Caco-2 (cell line): ENCODE measurements at regions of chr11 and their contacts with region 1.

Region 1: DNA sequence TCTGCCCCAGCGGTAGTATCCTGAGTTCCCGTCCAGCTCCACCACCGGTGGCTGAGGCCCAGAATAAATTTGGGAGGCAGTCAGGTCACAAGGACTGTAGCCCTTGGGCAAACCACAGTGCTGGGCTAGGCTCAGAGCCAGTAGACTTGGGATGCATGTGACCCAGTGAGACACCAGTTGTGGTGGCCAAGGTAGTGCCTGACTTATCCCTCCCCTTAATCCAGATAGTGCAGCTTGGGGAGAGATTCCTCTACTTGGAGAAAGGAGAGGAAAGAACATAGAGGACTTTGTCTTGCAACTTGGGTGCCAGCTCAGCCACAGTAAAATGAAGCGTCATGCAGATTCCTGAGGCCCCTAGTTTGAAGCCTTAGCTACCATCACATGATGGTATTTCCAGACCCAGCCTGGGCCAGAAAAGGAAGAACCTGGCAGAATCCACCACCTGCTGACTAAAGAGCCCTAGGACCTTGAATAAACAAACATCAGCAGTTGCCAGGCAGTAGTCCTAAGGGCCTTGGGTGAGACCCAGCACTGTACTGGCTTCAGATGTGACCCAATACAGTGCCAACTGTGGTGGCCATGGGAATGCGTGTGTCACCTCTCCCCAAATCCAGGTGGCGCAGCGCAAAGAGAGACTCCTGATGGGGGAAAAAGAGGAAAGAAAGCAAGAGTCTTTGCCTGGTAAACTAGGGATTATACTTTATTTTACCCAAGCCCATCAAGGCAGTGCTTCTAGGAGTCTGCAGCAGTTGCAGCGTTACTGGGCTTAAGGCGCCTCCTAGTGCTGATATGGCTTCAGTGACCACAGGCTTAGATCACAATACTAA is 17.0 kb upstream of the DDX10 start:
- DNase-seq: peak; percentile 82 to 84
- H3K4me3 ChIP-seq: no peak overlapping the region
- H3K4me3 Mint-ChIP-seq: no peak overlapping the region
- H3K27ac Mint-ChIP-seq: no peak overlapping the region
- H3K4me1 ChIP-seq: no peaks in the 10 kb centered on the region; the same call in 1 of the 2 replicates
- H3K4me1 Mint-ChIP-seq: peaks cover 5% of the 10 kb centered on the region
- H3K27me3 ChIP-seq: no peaks in the 10 kb centered on the region
- H3K27me3 Mint-ChIP-seq: peaks cover 11% of the 10 kb centered on the region
- CTCF ChIP-seq: peak; percentile 97 to 98

Region 2: GRCh38 chr11:108135845-108136544 is 511.9 kb before region 1 on chr11:
- CTCF ChIA-PET with region 1: no interaction called
- POLR2A ChIA-PET with region 1: no interaction called
- intact Hi-C with region 1: loop called (anchors 1 kb)
- DNase-seq: peak in 1 of 2 experiments; percentile 21
- H3K4me3 ChIP-seq: no peak overlapping the region
- H3K4me3 Mint-ChIP-seq: no peak overlapping the region
- H3K27ac Mint-ChIP-seq: no peak overlapping the region
- H3K4me1 ChIP-seq: no peaks in the 10 kb centered on the region
- H3K4me1 Mint-ChIP-seq: no peaks in the 10 kb centered on the region
- H3K27me3 ChIP-seq: no peaks in the 10 kb centered on the region
- H3K27me3 Mint-ChIP-seq: no peaks in the 10 kb centered on the region
- CTCF ChIP-seq: peak in 1 of 2 experiments; percentile 37

Region 3: DNA sequence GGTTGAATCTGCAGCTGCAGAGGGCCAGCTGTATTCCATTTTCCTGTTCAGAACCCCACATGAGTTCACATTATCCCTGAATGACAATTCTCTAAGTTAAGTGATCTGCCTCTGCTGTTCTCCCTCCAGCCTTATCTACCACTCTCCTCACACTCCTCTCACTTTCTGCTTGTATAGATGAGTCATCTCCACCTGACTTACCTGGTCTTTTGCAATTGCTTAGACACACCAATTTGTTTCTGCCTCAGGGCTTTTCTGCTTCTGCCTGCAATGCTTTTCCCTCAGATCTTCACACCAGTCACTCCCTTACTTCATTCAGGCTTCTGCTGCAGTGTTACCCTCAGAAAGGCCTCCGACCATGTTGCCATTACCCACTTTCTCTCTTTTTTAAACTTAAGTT is 306.9 kb before region 1 on chr11:
- CTCF ChIA-PET with region 1: no interaction called
- POLR2A ChIA-PET with region 1: no interaction called
- intact Hi-C with region 1: loop called (anchors 5 kb)
- DNase-seq: peak; percentile 87 to 88
- H3K4me3 ChIP-seq: no peak overlapping the region
- H3K4me3 Mint-ChIP-seq: peak overlapping the region; percentile 4
- H3K27ac Mint-ChIP-seq: peak overlapping the region; percentile 1
- H3K4me1 ChIP-seq: peaks cover 19% of the 10 kb centered on the region
- H3K4me1 Mint-ChIP-seq: peaks cover 16% of the 10 kb centered on the region
- H3K27me3 ChIP-seq: no peaks in the 10 kb centered on the region
- H3K27me3 Mint-ChIP-seq: no peaks in the 10 kb centered on the region
- CTCF ChIP-seq: no peak

Region 4: GRCh38 chr11:108467091-108467823 is 180.7 kb before region 1 on chr11 and contains the start of gene C11orf65:
- CTCF ChIA-PET with region 1: interaction called, 6 read pairs
- POLR2A ChIA-PET with region 1: no interaction called
- intact Hi-C with region 1: loop called (anchors 1 kb)
- DNase-seq: peak; percentile 99
- H3K4me3 ChIP-seq: peak within 1 kb of the TSS; percentile 68
- H3K4me3 Mint-ChIP-seq: peak within 1 kb of the TSS; percentile 97
- H3K27ac Mint-ChIP-seq: peak within 1 kb of the TSS; percentile 100
- H3K4me1 ChIP-seq: peaks cover 9% of the 10 kb centered on the region
- H3K4me1 Mint-ChIP-seq: peaks cover 17% of the 10 kb centered on the region
- H3K27me3 ChIP-seq: no peaks in the 10 kb centered on the region
- H3K27me3 Mint-ChIP-seq: no peaks in the 10 kb centered on the region
- CTCF ChIP-seq: no peak
- total RNA-seq, gene C11orf65: 0.86 and 1.0 TPM in 2 replicates

Region 5: GRCh38 chr11:108551651-108552462 is 96.1 kb before region 1 on chr11:
- CTCF ChIA-PET with region 1: no interaction called
- POLR2A ChIA-PET with region 1: no interaction called
- intact Hi-C with region 1: loop called (anchors 2 kb)
- DNase-seq: peak in 1 of 2 experiments; percentile 39
- H3K4me3 ChIP-seq: no peak overlapping the region
- H3K4me3 Mint-ChIP-seq: peak overlapping the region; percentile 38
- H3K27ac Mint-ChIP-seq: peak overlapping the region; percentile 40
- H3K4me1 ChIP-seq: peaks cover 51% of the 10 kb centered on the region
- H3K4me1 Mint-ChIP-seq: peaks cover 35% of the 10 kb centered on the region
- H3K27me3 ChIP-seq: no peaks in the 10 kb centered on the region
- H3K27me3 Mint-ChIP-seq: no peaks in the 10 kb centered on the region
- CTCF ChIP-seq: no peak

Region 6: DNA sequence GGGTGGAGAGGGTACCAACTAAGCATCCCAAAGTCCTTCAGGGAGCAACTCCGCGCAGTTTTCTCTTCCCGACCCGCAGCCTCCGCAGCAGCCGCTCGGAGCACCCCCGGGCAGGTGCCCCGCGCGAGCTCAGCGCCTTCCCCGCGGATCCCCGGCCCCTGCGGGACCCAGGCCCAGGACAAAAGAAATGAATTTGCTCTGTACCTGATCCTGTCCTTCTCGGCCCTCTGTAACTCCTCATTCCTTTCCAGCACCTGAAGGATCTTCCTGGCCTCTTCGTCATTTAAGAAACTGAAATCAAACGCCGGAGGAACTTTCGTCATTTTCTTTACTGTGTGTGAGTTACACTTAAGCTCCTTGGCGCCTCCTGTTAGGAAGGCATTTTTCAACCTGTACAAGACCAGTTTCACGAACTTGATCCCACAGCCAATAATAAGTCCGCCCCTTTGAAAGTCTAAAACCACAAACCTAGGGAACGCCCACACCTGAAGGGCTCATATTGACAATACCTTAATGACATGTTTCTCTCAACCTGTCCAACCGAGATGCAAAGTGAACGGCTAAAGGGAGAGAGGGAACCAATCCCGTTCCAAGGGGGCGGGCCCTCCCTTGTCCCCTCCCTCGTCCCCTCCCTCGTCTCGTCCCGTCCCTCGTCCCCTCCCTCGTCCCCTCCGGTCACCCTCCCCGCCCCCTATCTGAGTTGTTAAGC is 54.5 kb before region 1 on chr11 and contains the start of gene EXPH5:
- CTCF ChIA-PET with region 1: interaction called, 11 read pairs
- POLR2A ChIA-PET with region 1: interaction called, 4 read pairs
- intact Hi-C with region 1: loop called (anchors 1 kb)
- DNase-seq: peak; percentile 100
- H3K4me3 ChIP-seq: peak within 1 kb of the TSS; percentile 89
- H3K4me3 Mint-ChIP-seq: peak within 1 kb of the TSS; percentile 100
- H3K27ac Mint-ChIP-seq: peak within 1 kb of the TSS; percentile 100
- H3K4me1 ChIP-seq: peaks cover 18% of the 10 kb centered on the region
- H3K4me1 Mint-ChIP-seq: peaks cover 33% of the 10 kb centered on the region
- H3K27me3 ChIP-seq: no peaks in the 10 kb centered on the region; the same call in 1 of the 2 replicates
- H3K27me3 Mint-ChIP-seq: no peaks in the 10 kb centered on the region
- CTCF ChIP-seq: no peak
- total RNA-seq, gene EXPH5: 15.3 and 18.1 TPM in 2 replicates

Region 7: DNA sequence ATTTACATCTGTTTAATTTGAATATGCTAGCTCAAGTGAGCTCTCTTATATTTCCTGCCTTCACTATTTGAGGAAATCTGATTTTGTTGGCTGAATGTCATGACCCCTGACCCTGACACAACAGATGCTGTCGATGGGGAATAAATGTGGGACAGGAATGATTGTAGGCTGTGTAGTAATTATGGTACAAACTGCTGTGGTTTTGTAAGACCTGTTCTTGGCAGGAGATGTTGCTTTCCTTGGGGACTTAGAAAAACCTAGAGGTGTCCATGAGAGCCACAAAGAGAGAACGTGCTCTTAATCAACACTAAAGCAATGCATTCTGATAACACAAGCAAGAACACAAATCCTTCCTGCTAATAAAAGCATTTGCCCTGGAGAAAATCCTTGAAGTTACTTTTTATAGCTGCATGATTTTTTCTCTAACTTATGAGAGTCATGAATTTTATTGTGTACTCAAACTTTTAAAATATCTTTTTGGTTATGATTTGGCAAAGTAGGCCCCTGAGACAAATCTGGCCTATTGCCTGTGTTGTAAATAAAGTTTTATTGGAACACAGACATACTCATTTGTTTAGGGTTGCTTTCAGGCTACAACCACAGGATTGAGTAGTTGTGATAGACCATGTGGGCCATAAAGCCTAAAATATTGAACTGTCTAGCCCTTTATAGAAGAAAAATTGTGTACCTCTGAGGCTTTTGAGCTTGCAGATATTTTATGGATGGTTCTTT is 107.2 kb after region 1 on chr11:
- CTCF ChIA-PET with region 1: no interaction called
- POLR2A ChIA-PET with region 1: no interaction called
- intact Hi-C with region 1: no loop called
- DNase-seq: no peak
- H3K4me3 ChIP-seq: no peak overlapping the region
- H3K4me3 Mint-ChIP-seq: no peak overlapping the region
- H3K27ac Mint-ChIP-seq: no peak overlapping the region
- H3K4me1 ChIP-seq: peaks cover 21% of the 10 kb centered on the region
- H3K4me1 Mint-ChIP-seq: peaks cover 15% of the 10 kb centered on the region
- H3K27me3 ChIP-seq: no peaks in the 10 kb centered on the region
- H3K27me3 Mint-ChIP-seq: no peaks in the 10 kb centered on the region
- CTCF ChIP-seq: no peak